Activated CD4-positive, alpha-beta T cell treated with anti-CD3 and anti-CD28 coated beads for 36 hours (primary cell): ENCODE measurements at regions of chr3 and their contacts with region 1.

Region 1: DNA sequence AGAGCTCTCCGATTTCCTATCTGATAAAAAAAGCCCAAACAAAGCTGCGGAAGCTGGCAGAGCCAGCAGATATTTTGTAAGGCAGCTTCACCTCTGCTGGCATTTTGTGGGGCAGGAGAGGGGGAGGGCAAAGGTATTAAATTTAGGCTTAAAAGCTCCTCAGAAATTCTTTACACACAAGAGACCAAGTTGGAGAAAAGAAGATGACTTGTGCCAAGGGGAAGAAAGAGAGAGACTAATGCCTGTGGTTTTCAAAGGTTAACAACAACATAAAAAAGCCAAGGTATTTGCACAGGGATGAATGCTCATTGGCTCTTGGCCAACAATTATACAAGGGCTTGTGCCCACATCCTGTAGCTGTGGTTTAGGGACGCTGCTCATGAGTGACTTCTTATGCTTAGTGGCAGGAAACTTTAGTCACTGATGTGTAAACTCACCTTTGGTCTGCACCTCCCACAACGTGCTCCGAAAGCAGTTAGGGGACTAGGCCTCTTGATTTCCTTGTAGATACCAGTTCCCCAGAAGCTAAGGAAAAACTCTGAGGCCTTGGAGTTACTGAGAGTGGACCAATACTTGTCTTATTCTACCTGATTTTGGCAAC is 152.9 kb downstream of the TPRG1 start:
- DNase-seq: peak; percentile 91
- ATAC-seq: peak; percentile 96
- H3K4me3 Mint-ChIP-seq: peak overlapping the region; percentile 49
- H3K27ac Mint-ChIP-seq: peak overlapping the region; percentile 96
- H3K4me1 Mint-ChIP-seq: peaks cover 67% of the 10 kb centered on the region
- H3K27me3 Mint-ChIP-seq: no peaks in the 10 kb centered on the region

Region 2: GRCh38 chr3:189148081-189148507 is 176.5 kb before region 1 on chr3:
- CTCF ChIA-PET with region 1: no interaction called
- POLR2A ChIA-PET with region 1: no interaction called
- intact Hi-C with region 1: no loop called
- DNase-seq: peak; percentile 81
- ATAC-seq: peak; percentile 66
- H3K4me3 Mint-ChIP-seq: no peak overlapping the region
- H3K27ac Mint-ChIP-seq: no peak overlapping the region
- H3K4me1 Mint-ChIP-seq: peaks cover 17% of the 10 kb centered on the region
- H3K27me3 Mint-ChIP-seq: peaks cover 3% of the 10 kb centered on the region

Region 3: GRCh38 chr3:189276481-189277219 is 48.0 kb before region 1 on chr3:
- CTCF ChIA-PET with region 1: interaction called, 3 read pairs
- POLR2A ChIA-PET with region 1: no interaction called
- intact Hi-C with region 1: loop called in 1 of 2 experiments (anchors 2 kb)
- DNase-seq: no peak
- ATAC-seq: no peak
- H3K4me3 Mint-ChIP-seq: no peak overlapping the region
- H3K27ac Mint-ChIP-seq: peak overlapping the region; percentile 68
- H3K4me1 Mint-ChIP-seq: peaks cover 39% of the 10 kb centered on the region
- H3K27me3 Mint-ChIP-seq: no peaks in the 10 kb centered on the region

Region 4: DNA sequence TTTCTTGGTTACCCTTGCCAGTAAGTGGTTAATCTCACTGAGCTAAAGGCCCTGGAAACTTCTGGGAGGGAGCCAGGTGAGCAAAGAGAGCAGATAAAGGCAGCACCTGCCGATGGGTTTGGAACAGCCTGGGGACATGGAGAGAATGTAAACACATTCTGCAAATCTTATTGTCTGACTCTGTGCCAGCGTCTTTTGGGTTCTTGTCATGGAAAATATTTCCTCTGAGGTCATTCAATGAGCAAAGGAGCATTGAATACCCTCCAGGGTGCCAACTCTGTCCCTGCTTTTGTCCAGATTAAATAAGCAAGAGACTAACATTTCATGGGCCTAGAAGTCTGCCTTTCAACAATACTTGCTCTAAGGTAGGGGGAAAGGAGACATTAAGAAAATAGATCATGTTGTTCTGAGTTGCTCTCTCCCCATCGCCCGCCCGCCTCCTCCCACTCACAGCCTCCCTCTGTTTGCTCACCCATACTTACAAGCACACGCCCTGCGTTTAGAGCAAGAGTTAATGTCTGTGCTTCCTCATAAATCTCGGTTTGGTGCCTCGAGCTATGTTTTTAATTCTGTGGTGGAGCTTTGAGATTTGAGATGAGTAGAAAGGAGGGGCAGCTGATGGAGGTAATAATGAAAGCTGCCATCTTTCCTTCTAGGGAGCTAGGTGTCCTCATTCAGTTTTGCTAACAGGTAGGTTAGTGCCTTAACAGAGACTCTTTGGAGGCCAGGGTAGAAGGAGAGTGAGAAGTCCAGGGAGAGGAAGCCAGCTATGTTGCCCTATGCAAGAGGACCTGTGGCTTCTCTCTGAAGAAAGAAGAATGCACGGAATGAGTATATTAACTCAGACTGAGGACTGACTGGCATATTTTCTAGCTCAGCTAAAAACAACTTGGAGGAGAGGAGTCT is 19.9 kb before region 1 on chr3:
- CTCF ChIA-PET with region 1: interaction called, 16 read pairs
- POLR2A ChIA-PET with region 1: interaction called, 9 read pairs
- intact Hi-C with region 1: loop called (anchors 1 kb)
- DNase-seq: peak; percentile 58
- ATAC-seq: peak; percentile 47
- H3K4me3 Mint-ChIP-seq: peak overlapping the region; percentile 27
- H3K27ac Mint-ChIP-seq: peak overlapping the region; percentile 90
- H3K4me1 Mint-ChIP-seq: peaks cover 74% of the 10 kb centered on the region
- H3K27me3 Mint-ChIP-seq: no peaks in the 10 kb centered on the region

Region 5: DNA sequence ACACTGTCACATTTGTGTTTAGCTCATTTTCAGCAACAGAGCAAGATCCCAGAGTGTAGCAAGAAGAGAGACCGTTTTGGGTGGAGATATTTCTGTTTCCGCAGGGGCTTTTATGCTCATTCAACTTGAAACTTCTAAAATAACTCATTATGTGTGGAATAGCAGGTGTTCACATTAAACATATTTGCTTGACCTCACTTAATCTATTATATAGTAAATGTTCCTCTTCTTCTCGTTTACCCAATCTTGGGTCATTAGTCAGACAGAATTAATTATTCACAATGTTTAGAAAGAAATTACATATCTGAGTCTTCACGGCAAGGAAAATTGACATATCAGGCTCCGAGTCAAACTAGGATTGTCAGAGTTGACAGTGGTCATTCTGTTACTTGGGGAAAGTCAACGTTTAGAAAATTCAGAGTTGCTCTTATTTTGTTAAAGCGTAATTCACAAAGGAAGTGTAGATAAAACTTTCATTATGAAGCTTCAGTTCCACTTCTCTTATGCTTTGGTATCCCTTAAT is 70.0 kb after region 1 on chr3:
- CTCF ChIA-PET with region 1: no interaction called
- POLR2A ChIA-PET with region 1: no interaction called
- intact Hi-C with region 1: loop called (anchors 2 kb)
- DNase-seq: no peak
- ATAC-seq: peak; percentile 70
- H3K4me3 Mint-ChIP-seq: no peak overlapping the region
- H3K27ac Mint-ChIP-seq: no peak overlapping the region
- H3K4me1 Mint-ChIP-seq: peaks cover 17% of the 10 kb centered on the region
- H3K27me3 Mint-ChIP-seq: no peaks in the 10 kb centered on the region

Region 6: DNA sequence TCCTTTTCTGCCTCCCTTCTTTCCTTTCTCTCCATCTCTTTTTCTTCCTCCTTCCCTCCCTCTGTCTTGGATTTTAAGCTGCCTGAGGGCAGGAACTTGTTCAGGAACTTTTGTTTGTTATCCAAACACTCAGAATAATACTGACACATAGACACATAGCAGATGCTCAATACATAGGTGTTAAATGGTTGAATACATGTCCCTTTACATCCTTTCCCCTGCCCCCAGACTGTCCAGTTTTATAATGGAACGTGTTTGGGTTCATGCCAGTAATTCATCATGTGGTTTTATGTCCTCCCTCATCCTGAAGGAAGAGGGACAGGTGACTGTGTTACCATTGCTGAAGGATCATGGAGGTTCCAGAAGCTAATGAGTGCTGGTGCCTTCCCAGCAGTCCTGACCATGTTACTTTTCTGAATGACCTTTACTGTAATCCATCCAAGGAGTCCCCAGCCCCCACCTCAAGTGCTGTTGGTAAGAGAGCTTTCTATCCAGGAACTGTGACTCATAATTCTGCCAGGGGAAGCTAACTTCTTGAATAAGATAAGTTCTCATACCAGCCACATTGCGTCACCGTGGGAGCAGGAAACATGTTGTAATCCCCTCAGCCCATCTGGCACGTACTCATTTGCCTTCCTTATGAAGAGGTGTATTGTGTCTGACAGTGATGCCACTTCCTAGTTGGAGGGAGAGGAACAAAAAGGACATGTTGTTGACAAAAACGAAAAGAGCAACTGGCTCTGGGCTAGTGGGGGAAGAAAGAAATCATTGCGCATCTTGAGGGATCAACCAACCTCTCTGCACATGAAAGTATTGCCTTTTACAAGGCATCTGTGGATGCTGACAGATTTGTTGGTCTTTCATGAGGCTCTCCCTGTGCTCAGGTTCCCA is 1241.7 kb after region 1 on chr3:
- CTCF ChIA-PET with region 1: no interaction called
- POLR2A ChIA-PET with region 1: no interaction called
- intact Hi-C with region 1: loop called in 1 of 2 experiments (anchors 10 kb)
- DNase-seq: peak; percentile 92
- ATAC-seq: peak; percentile 88
- H3K4me3 Mint-ChIP-seq: no peak overlapping the region
- H3K27ac Mint-ChIP-seq: peak overlapping the region; percentile 97
- H3K4me1 Mint-ChIP-seq: peaks cover 61% of the 10 kb centered on the region
- H3K27me3 Mint-ChIP-seq: no peaks in the 10 kb centered on the region